Activated CD4-positive, alpha-beta memory T cell treated with anti-CD3 and anti-CD28 coated beads for 36 hours (primary cell): ENCODE measurements at regions of chr11 and their contacts with region 1.

Region 1: DNA sequence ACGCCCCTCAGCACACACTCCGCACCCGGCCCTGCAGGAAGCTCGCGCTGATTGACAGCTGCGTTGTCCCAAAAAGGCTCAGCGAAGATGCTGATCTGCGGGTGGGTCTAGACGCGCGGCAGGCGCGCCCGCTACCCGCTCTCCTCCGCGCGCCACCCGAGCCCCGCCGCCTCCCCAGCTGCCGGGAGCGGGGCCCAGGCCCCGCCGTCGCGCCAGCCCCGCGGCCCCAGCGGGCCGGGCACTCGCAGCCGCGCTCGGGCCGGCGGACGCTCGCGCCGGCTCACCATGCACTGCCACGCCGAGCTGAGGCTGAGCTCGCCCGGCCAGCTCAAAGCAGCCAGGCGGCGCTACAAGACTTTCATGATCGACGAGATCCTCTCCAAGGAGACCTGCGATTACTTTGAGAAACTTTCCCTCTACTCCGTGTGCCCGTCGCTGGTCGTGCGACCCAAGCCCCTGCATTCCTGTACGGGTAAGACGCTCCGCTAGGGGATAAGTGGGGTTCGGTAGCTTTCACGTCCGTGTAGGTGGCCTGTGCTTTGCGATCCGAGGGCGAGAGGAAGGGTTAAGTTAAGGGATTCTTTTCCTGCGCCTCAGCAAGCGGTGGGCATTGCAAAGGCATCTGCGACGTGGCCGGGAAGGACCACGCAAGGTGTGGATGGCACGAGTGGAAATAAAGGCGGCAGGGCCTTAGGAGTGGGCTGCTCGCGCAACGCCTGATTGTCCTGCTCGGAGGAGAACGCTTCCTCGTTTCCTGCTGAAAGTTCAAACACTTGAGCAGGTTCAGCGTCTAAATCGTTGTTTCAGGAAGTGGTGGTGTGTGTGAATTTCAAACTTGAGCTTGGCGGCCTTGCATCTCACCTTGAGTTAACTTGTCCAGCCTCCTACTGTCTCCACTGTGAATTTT is at the start of gene BARX2:
- DNase-seq: peak; percentile 64
- H3K4me3 Mint-ChIP-seq: peak within 1 kb of the TSS; percentile 62
- H3K27ac Mint-ChIP-seq: no peak within 1 kb of the TSS
- H3K4me1 Mint-ChIP-seq: peaks cover 26% of the 10 kb centered on the region
- H3K27me3 Mint-ChIP-seq: peaks cover 68% of the 10 kb centered on the region
- total RNA-seq, gene BARX2: 0.29 to 0.71 TPM

Region 2: DNA sequence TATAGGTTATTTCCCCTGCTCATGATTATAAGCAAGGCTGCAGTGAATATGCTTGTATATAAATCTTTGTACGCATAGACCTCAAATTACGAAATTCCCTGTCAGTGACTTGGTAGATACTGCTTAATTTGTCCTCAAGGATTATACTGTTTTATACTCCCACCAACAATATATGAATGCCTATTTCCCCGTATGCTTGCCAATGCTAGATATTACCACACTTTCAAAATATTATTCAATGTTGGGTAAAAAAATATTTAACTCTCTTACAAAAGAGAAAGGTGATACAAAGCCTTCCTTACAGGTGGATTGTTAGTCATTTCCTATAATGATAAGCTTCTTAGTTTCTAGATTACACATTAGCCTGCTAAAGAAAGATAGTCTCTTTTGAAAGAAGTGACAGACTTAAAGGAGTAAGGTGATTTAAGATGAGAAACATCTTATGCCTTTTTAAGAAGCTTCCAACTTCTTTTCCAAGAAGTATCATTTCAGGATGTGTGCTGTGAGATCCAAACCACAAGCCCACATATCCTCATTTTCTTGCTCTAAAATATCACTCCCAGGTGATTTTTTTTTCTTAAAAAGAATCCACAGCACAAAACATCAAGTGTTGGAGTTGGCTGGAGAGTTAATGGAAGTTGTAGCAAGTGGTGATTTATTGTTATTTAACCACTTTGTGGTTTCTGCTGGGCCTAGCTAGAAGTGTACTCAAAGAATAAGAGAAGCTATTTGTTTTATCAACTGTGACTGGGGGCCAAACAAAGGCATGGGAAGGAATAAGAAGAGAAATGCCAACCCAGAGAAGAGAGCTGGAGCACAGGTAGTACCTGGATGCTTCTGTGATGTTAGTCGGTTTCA is 58.9 kb after region 1 on chr11:
- CTCF ChIA-PET with region 1: no interaction called
- POLR2A ChIA-PET with region 1: no interaction called
- intact Hi-C with region 1: loop called (anchors 5 kb)
- DNase-seq: no peak
- H3K4me3 Mint-ChIP-seq: no peak overlapping the region
- H3K27ac Mint-ChIP-seq: no peak overlapping the region
- H3K4me1 Mint-ChIP-seq: peaks cover 9% of the 10 kb centered on the region
- H3K27me3 Mint-ChIP-seq: peaks cover 12% of the 10 kb centered on the region

Region 3: DNA sequence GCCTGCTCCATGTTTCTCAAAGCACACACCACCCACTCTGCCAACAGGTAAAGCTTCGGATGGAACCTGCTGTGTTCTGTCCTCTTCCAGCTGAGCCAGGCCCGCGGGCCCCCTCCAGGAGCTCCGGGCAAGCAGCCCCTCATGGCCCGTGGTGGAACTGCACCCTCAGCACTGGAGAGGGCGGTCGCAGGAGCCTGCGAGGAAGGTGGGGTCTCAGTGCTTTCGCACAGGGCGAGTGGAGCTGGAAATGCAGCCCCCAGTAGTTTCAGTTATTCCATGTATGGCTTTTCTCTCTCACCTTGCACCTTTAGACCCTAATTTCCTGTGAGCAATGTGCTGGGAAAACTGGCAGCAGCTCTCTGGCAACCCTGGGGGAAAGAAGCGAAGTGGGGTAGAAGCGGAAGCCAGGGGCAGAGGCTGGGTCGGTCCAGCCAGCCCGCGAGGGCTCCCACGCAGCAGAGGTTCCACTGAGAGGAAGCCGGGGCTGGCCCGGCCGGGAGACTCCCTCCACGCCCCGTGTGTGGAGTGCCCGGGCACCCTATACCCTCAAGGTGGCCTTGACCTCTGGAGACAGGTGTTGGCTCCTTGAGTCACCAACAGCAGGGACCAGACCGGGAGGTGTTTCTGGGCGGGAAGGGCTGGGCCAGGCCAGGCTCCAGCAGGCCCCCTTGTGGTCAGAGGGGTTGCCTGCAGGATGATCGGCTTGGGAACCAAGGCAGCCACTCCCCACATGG is 319.7 kb after region 1 on chr11:
- CTCF ChIA-PET with region 1: interaction called, 17 read pairs
- POLR2A ChIA-PET with region 1: no interaction called
- intact Hi-C with region 1: loop called (anchors 1 kb)
- DNase-seq: peak; percentile 80
- H3K4me3 Mint-ChIP-seq: peak overlapping the region; percentile 48
- H3K27ac Mint-ChIP-seq: no peak overlapping the region
- H3K4me1 Mint-ChIP-seq: peaks cover 10% of the 10 kb centered on the region
- H3K27me3 Mint-ChIP-seq: no peaks in the 10 kb centered on the region

Region 4: DNA sequence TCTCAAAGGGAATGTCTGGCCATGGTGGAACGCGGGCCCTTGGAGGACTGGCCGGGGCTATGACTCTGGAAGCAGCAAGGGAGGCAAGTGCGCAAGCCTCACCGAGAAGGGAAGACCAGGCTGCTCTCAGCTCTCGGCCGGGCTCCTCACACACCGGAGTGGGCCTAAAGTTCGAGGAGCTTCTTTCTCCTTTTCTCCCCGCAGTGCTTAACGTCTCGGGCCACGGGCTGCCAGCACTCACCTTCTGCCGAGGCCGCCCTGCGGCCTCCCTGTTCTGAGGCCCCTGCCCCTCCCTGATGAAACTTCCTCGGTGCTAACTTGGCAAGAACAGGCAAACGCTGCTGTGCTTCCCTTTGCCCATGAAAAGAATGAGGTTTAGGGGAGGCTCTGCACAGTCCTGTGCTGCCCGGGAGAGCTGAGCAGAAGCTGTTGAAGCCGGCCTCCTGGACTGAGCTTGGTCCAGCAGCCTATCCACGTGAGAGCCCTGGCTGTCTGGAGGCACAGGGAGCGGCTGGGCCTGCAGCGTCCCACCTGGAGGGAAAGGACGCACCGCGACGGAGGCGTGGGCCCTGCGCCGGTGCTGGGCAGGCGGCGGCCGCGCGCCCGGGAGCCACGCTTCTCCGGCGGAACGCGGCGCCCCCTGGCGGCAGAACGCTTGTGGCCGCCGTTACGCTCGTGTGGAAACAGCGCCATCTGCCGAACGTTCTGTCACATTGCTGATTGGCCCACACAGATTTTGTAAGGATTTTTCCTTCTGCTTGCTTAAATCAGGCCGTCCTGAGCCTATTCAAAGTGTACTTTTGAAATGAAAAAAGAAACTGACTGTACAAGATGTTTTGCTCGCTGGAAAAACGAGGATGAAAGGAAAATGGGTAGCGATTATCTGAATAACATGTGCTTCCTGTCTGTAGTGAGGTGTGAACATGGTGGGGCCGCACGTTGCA is 374.6 kb after region 1 on chr11:
- CTCF ChIA-PET with region 1: interaction called, 11 read pairs
- POLR2A ChIA-PET with region 1: no interaction called
- intact Hi-C with region 1: loop called (anchors 1 kb)
- DNase-seq: peak; percentile 85
- H3K4me3 Mint-ChIP-seq: no peak overlapping the region
- H3K27ac Mint-ChIP-seq: no peak overlapping the region
- H3K4me1 Mint-ChIP-seq: peaks cover 7% of the 10 kb centered on the region
- H3K27me3 Mint-ChIP-seq: peaks cover 3% of the 10 kb centered on the region